CD8-positive, alpha-beta T cell (primary cell): ENCODE measurements at regions of chr18 and their contacts with region 1.

Region 1: DNA sequence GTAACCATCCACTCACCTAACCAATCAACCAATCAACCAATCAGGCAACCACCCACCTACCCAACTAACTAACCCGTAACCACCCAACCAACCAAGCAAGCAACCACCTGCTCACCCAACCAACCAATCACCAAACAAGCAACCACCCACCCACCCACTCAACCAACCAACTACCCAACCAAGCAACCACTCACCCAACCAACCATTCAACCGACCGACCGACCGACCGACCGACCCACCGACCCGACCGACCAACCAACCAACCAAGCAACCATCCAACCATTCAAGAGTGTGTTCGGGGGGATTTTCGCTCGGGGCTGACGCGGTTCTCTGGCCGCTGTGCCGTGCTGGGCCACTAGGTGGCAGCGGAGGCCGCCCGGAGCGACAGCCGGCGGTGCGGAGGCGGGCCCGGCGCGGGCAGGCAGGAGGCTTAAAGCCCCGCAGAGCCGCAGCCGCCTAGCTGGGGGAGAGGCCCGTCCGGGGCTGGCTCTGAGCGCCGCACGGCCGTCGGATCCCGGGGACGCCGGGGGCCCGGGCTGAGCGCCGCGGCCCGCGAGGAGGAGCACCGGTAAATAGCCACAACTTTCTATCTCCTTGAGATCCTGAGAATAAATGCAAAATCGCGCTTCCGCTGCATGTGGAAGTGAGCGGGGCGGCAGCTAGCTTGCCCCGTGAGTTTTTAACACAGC is at the start of gene MC5R:
- DNase-seq: peak; percentile 45 to 85 (median 72)
- ATAC-seq: peak; percentile 99
- H3K4me3 ChIP-seq: peak within 1 kb of the TSS in 1 of 2 experiments; percentile 41
- H3K4me3 Mint-ChIP-seq: peak within 1 kb of the TSS; percentile 70
- H3K27ac ChIP-seq: no peak within 1 kb of the TSS
- H3K27ac Mint-ChIP-seq: no peak within 1 kb of the TSS
- H3K4me1 ChIP-seq: no peaks in the 10 kb centered on the region
- H3K4me1 Mint-ChIP-seq: peaks cover 5% of the 10 kb centered on the region
- H3K27me3 ChIP-seq: peaks cover 0 to 14% of the 10 kb centered on the region in 2 experiments
- H3K27me3 Mint-ChIP-seq: peaks cover 39% of the 10 kb centered on the region
- CTCF ChIP-seq: peak; percentile 70
- total RNA-seq, gene MC5R: not detected

Region 2: DNA sequence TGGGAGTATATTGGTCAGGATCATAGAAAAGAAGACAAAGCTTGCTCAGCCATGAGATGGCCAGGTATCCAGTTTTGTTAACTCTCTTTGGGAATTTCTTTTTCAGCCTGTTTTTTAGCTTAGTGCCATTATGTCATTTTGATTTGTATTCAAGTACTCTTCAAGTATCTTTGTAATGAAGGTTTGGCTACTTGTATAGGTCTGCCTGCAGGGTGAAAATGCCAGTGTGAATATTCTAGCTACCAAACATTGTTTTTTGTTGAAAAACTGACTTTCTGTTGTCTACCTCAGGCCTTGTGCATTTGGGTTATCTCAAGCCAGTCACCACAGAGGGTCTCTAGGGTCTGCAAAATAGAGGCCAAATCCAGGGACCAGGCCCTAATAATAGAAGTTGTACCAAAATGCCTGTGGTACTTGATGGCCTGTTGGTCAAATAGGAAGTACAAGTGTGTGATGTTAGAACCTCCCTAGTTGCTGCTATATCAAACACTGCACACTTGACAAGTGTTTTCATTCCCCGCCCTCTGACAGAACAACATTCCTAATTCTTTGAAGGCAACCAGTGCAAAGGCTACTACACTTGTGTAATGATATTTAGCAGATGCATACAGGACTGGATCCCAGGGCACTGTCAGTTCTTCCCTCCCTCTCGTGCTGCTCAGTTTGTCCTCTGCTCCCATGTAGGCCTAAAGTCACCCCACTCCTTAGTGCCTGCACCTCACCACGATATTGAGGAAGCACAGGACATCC is 61.0 kb before region 1 on chr18:
- CTCF ChIA-PET with region 1: no interaction called
- POLR2A ChIA-PET with region 1: no interaction called
- intact Hi-C with region 1: no loop called
- DNase-seq: no peak
- ATAC-seq: no peak
- H3K4me3 ChIP-seq: no peak overlapping the region
- H3K4me3 Mint-ChIP-seq: no peak overlapping the region
- H3K27ac ChIP-seq: no peak overlapping the region
- H3K27ac Mint-ChIP-seq: no peak overlapping the region
- H3K4me1 ChIP-seq: no peaks in the 10 kb centered on the region
- H3K4me1 Mint-ChIP-seq: no peaks in the 10 kb centered on the region
- H3K27me3 ChIP-seq: no peaks in the 10 kb centered on the region
- H3K27me3 Mint-ChIP-seq: no peaks in the 10 kb centered on the region
- CTCF ChIP-seq: no peak

Region 3: GRCh38 chr18:13800505-13801259 is 23.2 kb before region 1 on chr18:
- CTCF ChIA-PET with region 1: no interaction called
- POLR2A ChIA-PET with region 1: no interaction called
- intact Hi-C with region 1: no loop called
- DNase-seq: peak in 8 of 9 experiments; percentile 8 to 59 (median 27)
- ATAC-seq: peak; percentile 44
- H3K4me3 ChIP-seq: no peak overlapping the region
- H3K4me3 Mint-ChIP-seq: peak overlapping the region; percentile 49
- H3K27ac ChIP-seq: no peak overlapping the region
- H3K27ac Mint-ChIP-seq: no peak overlapping the region
- H3K4me1 ChIP-seq: no peaks in the 10 kb centered on the region
- H3K4me1 Mint-ChIP-seq: peaks cover 5% of the 10 kb centered on the region
- H3K27me3 ChIP-seq: peaks cover 4 to 6% of the 10 kb centered on the region in 2 experiments
- H3K27me3 Mint-ChIP-seq: peaks cover 56% of the 10 kb centered on the region
- CTCF ChIP-seq: no peak

Region 4: GRCh38 chr18:13813271-13813849 is 10.5 kb before region 1 on chr18:
- CTCF ChIA-PET with region 1: interaction called, 31 read pairs
- POLR2A ChIA-PET with region 1: no interaction called
- intact Hi-C with region 1: no loop called
- DNase-seq: peak in 8 of 9 experiments; percentile 18 to 67 (median 54)
- ATAC-seq: peak; percentile 72
- H3K4me3 ChIP-seq: no peak overlapping the region
- H3K4me3 Mint-ChIP-seq: no peak overlapping the region
- H3K27ac ChIP-seq: no peak overlapping the region
- H3K27ac Mint-ChIP-seq: no peak overlapping the region
- H3K4me1 ChIP-seq: no peaks in the 10 kb centered on the region
- H3K4me1 Mint-ChIP-seq: no peaks in the 10 kb centered on the region
- H3K27me3 ChIP-seq: no peaks in the 10 kb centered on the region
- H3K27me3 Mint-ChIP-seq: no peaks in the 10 kb centered on the region
- CTCF ChIP-seq: peak; percentile 82

Region 5: DNA sequence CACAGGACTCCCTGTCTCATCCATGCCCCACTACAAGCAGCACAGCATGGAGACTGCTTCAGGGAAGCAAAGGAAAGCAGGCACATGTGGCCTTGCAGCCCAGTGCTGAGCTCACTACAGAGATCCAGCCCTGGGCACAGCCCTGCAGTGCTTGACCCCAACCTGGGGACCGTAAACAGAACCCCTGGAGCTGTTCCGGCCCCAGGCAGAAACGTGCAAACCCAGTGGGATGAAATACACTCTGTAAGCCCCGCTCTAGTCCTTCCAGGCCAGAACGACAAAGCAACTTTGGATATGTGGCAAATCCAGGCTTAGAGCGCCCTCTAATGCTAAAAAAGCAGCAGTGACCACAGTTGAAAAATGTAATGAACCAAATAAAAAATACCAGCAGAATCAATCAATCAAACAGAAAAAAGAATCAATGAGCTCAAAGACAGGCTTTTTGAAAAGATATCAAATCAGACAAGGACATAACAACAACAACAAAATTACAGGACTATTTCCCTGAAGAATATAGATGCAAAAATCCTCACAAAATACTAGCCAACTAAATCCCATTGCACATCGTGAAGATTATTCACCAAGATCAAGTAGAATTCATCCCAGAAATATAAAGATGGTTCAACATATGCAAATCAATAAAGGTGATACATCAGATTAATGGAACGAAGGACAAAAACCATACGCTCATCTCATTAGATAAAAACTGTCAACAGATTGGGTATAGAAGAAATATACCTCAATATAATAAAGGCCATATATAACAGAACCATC is 262.8 kb after region 1 on chr18:
- CTCF ChIA-PET with region 1: no interaction called
- POLR2A ChIA-PET with region 1: no interaction called
- intact Hi-C with region 1: loop called in 1 of 2 experiments (anchors 10 kb)
- DNase-seq: peak in 2 of 9 experiments; percentile 5 to 9
- ATAC-seq: no peak
- H3K4me3 ChIP-seq: no peak overlapping the region
- H3K4me3 Mint-ChIP-seq: no peak overlapping the region
- H3K27ac ChIP-seq: no peak overlapping the region
- H3K27ac Mint-ChIP-seq: no peak overlapping the region
- H3K4me1 ChIP-seq: no peaks in the 10 kb centered on the region
- H3K4me1 Mint-ChIP-seq: no peaks in the 10 kb centered on the region
- H3K27me3 ChIP-seq: no peaks in the 10 kb centered on the region
- H3K27me3 Mint-ChIP-seq: peaks cover 4% of the 10 kb centered on the region
- CTCF ChIP-seq: peak; percentile 32